ENCODE measurements at regions of chr14 and their contacts with region 1.

Region 1: DNA sequence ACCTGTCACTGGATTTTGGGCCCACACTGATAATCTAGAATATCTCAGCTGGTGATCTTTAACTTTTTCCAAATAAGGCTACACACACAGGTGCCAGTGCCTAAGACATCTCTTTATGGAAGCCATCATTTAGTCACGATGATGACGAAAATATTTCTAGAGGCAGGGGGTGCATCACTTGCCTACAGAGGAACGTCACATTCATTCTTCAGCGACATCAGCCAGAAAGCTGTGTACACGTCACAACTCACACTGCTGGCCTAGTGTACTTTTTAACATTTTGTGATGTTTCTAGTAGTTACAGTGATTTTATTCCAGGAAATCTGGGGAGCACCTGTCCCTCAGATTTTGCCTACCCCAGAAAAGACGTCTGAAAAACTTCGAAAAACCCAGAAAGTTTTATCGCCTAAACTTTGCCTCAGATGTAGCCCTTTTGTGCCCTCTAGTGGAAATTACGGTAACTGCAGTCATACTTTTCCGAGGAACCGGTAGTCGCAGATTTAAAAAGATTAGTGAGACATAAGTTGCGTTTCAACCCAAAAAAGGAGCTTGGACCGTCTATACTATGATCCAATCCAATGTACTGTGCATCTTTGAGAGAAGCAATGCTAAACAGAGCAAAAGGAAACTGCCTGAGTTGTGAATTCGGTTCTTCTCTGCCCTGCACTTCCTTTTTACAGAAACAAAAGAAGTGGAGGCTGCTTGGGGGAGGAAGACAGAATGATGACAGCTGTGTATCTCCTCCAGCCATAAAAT is 64.3 kb upstream of the STON2 start:
- DNase-seq: no peak
- ATAC-seq: peak; percentile 70

Region 2: GRCh38 chr14:79749065-79749464 is 1715.4 kb before region 1 on chr14:
- intact Hi-C with region 1: loop called (anchors 10 kb)
- DNase-seq: no peak
- ATAC-seq: no peak

Region 3: GRCh38 chr14:80996049-80996901 is 468.1 kb before region 1 on chr14:
- intact Hi-C with region 1: loop called (anchors 10 kb)
- DNase-seq: no peak
- ATAC-seq: peak; percentile 93

Measured in sciatic nerve (tissue), 2 donors.